ENCODE measurements at regions of chr11 and their contacts with region 1.

Region 1: DNA sequence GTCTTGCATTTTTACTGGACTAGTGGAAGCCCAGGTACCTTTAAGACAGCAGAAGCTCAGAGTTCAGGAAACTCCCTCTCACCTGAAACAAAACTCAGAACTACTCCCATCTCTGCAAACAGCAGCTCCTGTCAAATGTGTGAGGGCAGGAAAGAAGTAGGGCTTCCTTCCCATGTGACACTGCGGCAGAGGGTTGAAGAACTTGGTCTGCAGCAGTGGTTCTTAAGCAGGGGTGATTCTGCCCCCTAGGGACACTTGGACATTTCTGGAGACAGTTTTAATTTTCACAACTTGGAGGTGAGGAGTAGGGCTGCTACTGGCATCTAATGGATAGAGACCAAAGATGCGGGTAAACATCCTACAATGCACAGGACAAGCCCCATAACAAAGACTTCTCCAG is 63.4 kb downstream of the RCN1 start:
- DNase-seq: peak in 1 of 2 experiments; percentile 14
- H3K4me3 ChIP-seq: no peak overlapping the region
- H3K4me3 Mint-ChIP-seq: no peak overlapping the region
- H3K27ac Mint-ChIP-seq: no peak overlapping the region
- H3K4me1 ChIP-seq: no peaks in the 10 kb centered on the region
- H3K4me1 Mint-ChIP-seq: peaks cover 5% of the 10 kb centered on the region
- H3K27me3 ChIP-seq: no peaks in the 10 kb centered on the region
- H3K27me3 Mint-ChIP-seq: peaks cover 14% of the 10 kb centered on the region
- CTCF ChIP-seq: peak in 1 of 2 experiments; percentile 42

Region 2: DNA sequence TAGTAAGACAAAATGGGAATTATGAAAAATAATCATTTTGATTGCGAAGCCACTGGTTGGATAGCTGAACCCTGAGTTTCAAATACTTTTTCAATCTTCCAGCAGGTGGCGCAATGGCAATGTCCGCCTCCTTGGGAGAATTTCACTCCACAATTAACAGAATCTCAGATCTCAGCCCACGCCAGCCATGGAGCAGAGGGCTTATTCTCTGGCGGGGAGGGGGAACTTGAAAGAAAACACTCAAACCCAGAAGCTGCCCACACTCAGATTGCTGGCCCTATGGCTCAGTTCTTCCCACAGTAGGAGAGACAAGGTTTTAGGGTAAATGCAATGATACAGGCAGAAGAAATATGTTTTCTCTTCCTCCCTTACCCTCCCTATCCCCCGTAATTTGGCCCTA is 102.1 kb before region 1 on chr11:
- CTCF ChIA-PET with region 1: no interaction called
- POLR2A ChIA-PET with region 1: no interaction called
- intact Hi-C with region 1: loop called (anchors 1 kb)
- DNase-seq: peak; percentile 42 to 64
- H3K4me3 ChIP-seq: no peak overlapping the region
- H3K4me3 Mint-ChIP-seq: no peak overlapping the region
- H3K27ac Mint-ChIP-seq: no peak overlapping the region
- H3K4me1 ChIP-seq: no peaks in the 10 kb centered on the region
- H3K4me1 Mint-ChIP-seq: no peaks in the 10 kb centered on the region
- H3K27me3 ChIP-seq: no peaks in the 10 kb centered on the region; the same call in 1 of the 2 replicates
- H3K27me3 Mint-ChIP-seq: peaks cover 27% of the 10 kb centered on the region
- CTCF ChIP-seq: peak; percentile 68 to 80

Region 3: DNA sequence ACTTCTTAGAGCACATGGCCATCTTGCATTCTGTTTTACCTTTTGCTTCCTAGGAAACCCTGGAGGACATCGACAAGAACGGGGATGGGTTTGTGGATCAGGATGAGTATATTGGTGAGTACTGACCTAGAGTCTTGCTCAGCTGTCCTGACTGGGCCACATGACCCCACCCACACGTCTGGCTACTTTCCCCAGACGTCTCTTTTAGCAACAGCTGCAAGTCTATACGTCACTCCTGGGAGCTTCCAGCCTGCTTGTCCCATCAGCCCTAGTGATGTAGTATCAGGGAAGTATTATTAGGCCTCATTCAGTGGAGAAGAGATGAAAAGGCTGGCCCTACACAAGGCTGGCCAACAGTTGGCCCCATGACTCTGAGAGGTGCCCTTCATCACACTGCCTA is 53.8 kb before region 1 on chr11:
- CTCF ChIA-PET with region 1: no interaction called
- POLR2A ChIA-PET with region 1: no interaction called
- intact Hi-C with region 1: loop called (anchors 1 kb)
- DNase-seq: no peak
- H3K4me3 ChIP-seq: no peak overlapping the region
- H3K4me3 Mint-ChIP-seq: no peak overlapping the region
- H3K27ac Mint-ChIP-seq: no peak overlapping the region
- H3K4me1 ChIP-seq: peaks cover 16% of the 10 kb centered on the region; the same call in 1 of the 2 replicates
- H3K4me1 Mint-ChIP-seq: peaks cover 12% of the 10 kb centered on the region
- H3K27me3 ChIP-seq: no peaks in the 10 kb centered on the region
- H3K27me3 Mint-ChIP-seq: no peaks in the 10 kb centered on the region
- CTCF ChIP-seq: no peak

Region 4: GRCh38 chr11:32118025-32118974 is 36.0 kb before region 1 on chr11:
- CTCF ChIA-PET with region 1: no interaction called
- POLR2A ChIA-PET with region 1: no interaction called
- intact Hi-C with region 1: loop called (anchors 5 kb)
- DNase-seq: no peak
- H3K4me3 ChIP-seq: no peak overlapping the region
- H3K4me3 Mint-ChIP-seq: no peak overlapping the region
- H3K27ac Mint-ChIP-seq: no peak overlapping the region
- H3K4me1 ChIP-seq: no peaks in the 10 kb centered on the region
- H3K4me1 Mint-ChIP-seq: no peaks in the 10 kb centered on the region
- H3K27me3 ChIP-seq: no peaks in the 10 kb centered on the region
- H3K27me3 Mint-ChIP-seq: peaks cover 25% of the 10 kb centered on the region
- CTCF ChIP-seq: no peak

Measured in Caco-2 (cell line).